Endothelial cell of umbilical vein (primary cell): ENCODE measurements at regions of chr9 and their contacts with region 1.

Region 1: GRCh38 chr9:79201636-79202035 is 370.1 kb upstream of the TLE4 start:
- DNase-seq: no peak
- H3K4me3 ChIP-seq: no peak overlapping the region
- H3K27ac ChIP-seq: no peak overlapping the region
- H3K4me1 ChIP-seq: no peaks in the 10 kb centered on the region
- H3K27me3 ChIP-seq: peaks cover 3 to 4% of the 10 kb centered on the region in 2 experiments
- CTCF ChIP-seq: no peak
- POLR2A ChIP-seq: no peak

Region 2: DNA sequence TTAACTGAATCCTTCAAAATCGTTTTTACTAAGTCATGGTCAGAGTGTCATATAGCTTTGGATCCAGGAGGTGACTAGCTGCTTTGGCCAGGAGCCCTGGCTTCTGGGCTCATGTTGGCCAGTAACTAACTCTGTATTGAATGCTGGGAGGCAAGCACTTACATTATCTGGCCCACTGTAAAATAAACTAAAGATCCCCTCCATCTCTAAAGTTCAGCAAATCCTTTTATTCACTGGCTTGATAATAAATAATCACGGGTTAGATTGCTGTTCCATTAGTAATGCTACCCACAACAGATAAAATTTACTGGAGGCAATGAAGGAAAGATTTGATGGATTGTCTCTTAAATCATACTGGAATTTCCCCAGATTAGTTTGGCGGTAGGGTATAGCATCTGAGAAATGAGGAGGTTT is 12.1 kb before region 1 on chr9:
- CTCF ChIA-PET with region 1: interaction called, 12 read pairs
- POLR2A ChIA-PET with region 1: no interaction called
- dilution Hi-C with region 1: no loop called
- intact Hi-C with region 1: no loop called
- DNase-seq: no peak
- H3K4me3 ChIP-seq: no peak overlapping the region
- H3K27ac ChIP-seq: no peak overlapping the region
- H3K4me1 ChIP-seq: no peaks in the 10 kb centered on the region
- H3K27me3 ChIP-seq: no peaks in the 10 kb centered on the region
- CTCF ChIP-seq: no peak
- POLR2A ChIP-seq: no peak